ENCODE measurements at regions of chr10 and their contacts with region 1.

Region 1: GRCh38 chr10:88687853-88688467 is 18.1 kb upstream of the LIPK start:
- DNase-seq: peak; percentile 3
- ATAC-seq: no peak
- H3K4me3 ChIP-seq: no peak overlapping the region
- H3K27ac ChIP-seq: no peak overlapping the region
- H3K4me1 ChIP-seq: no peaks in the 10 kb centered on the region
- H3K27me3 ChIP-seq: no peaks in the 10 kb centered on the region
- CTCF ChIP-seq: peak; percentile 48
- EP300 ChIP-seq: no peak
- POLR2A ChIP-seq: no peak
- RAD21 ChIP-seq: no peak

Region 2: GRCh38 chr10:87991946-87992345 is 696.0 kb before region 1 on chr10:
- CTCF ChIA-PET with region 1: no interaction called
- POLR2A ChIA-PET with region 1: no interaction called
- in situ Hi-C with region 1: no loop called
- intact Hi-C with region 1: no loop called
- DNase-seq: no peak
- ATAC-seq: no peak
- H3K4me3 ChIP-seq: no peak overlapping the region
- H3K27ac ChIP-seq: no peak overlapping the region
- H3K4me1 ChIP-seq: no peaks in the 10 kb centered on the region
- H3K27me3 ChIP-seq: no peaks in the 10 kb centered on the region
- CTCF ChIP-seq: no peak
- EP300 ChIP-seq: no peak
- POLR2A ChIP-seq: no peak
- RAD21 ChIP-seq: no peak

Region 3: DNA sequence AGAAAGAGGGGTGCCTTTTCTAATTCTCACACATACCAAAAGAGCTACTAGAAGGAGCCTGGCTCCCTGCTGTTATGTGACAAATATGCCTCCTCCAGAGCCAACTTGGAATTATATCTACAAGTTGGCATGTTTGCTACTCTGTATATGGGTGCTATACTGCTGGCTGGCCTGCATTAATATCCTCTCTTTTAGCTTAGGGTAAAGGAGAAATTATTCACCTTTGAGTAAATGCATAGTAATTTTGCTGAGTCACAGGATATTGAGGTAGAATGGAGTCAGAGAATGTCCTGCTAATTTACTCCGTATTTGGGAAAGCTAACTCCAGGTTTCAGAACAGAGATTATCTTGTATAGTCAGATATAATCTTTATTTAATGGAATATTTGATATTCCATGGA is 47.7 kb after region 1 on chr10:
- CTCF ChIA-PET with region 1: no interaction called
- POLR2A ChIA-PET with region 1: no interaction called
- in situ Hi-C with region 1: no loop called
- intact Hi-C with region 1: loop called (anchors 5 kb)
- DNase-seq: no peak
- ATAC-seq: no peak
- H3K4me3 ChIP-seq: no peak overlapping the region
- H3K27ac ChIP-seq: no peak overlapping the region
- H3K4me1 ChIP-seq: no peaks in the 10 kb centered on the region
- H3K27me3 ChIP-seq: no peaks in the 10 kb centered on the region; a peak in 1 of 5 replicates
- CTCF ChIP-seq: no peak
- EP300 ChIP-seq: no peak
- POLR2A ChIP-seq: no peak
- RAD21 ChIP-seq: no peak

Region 4: GRCh38 chr10:88791924-88792323 is 104.0 kb after region 1 on chr10:
- CTCF ChIA-PET with region 1: interaction called, 7 read pairs
- POLR2A ChIA-PET with region 1: no interaction called
- in situ Hi-C with region 1: no loop called
- intact Hi-C with region 1: loop called (anchors 1 kb)
- DNase-seq: peak; percentile 8
- ATAC-seq: peak; percentile 79
- H3K4me3 ChIP-seq: no peak overlapping the region
- H3K27ac ChIP-seq: no peak overlapping the region
- H3K4me1 ChIP-seq: no peaks in the 10 kb centered on the region
- H3K27me3 ChIP-seq: no peaks in the 10 kb centered on the region
- CTCF ChIP-seq: peak; percentile 45
- EP300 ChIP-seq: no peak
- POLR2A ChIP-seq: no peak
- RAD21 ChIP-seq: no peak

Region 5: GRCh38 chr10:88810196-88810961 is 122.4 kb after region 1 on chr10:
- CTCF ChIA-PET with region 1: interaction called, 13 read pairs
- POLR2A ChIA-PET with region 1: no interaction called
- in situ Hi-C with region 1: no loop called
- intact Hi-C with region 1: loop called (anchors 1 kb)
- DNase-seq: peak; percentile 20
- ATAC-seq: peak; percentile 80
- H3K4me3 ChIP-seq: no peak overlapping the region
- H3K27ac ChIP-seq: no peak overlapping the region
- H3K4me1 ChIP-seq: no peaks in the 10 kb centered on the region
- H3K27me3 ChIP-seq: no peaks in the 10 kb centered on the region; a peak in 1 of 5 replicates
- CTCF ChIP-seq: peak; percentile 53
- EP300 ChIP-seq: no peak
- POLR2A ChIP-seq: no peak
- RAD21 ChIP-seq: no peak

Region 6: DNA sequence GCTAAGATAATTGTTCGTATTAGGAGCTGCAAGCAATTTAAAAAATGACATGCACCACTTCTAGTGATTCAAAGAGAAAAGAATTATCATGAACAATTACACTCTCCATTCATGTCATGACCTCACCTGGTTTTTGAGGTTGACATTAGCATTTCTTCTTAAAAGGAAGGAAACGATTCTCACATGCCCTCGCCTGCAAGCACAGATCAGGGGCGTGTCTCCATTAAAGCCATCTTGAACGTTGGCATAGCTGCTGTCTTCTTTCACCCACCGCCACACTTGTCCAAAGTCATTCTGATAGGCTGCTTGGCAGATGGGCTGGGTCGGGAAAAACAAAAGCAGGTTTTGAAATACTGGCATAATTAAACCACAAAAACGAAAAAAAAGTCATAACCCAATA is 143.7 kb after region 1 on chr10:
- CTCF ChIA-PET with region 1: no interaction called
- POLR2A ChIA-PET with region 1: no interaction called
- in situ Hi-C with region 1: no loop called
- intact Hi-C with region 1: no loop called
- DNase-seq: no peak
- ATAC-seq: no peak
- H3K4me3 ChIP-seq: no peak overlapping the region
- H3K27ac ChIP-seq: no peak overlapping the region
- H3K4me1 ChIP-seq: no peaks in the 10 kb centered on the region
- H3K27me3 ChIP-seq: no peaks in the 10 kb centered on the region
- CTCF ChIP-seq: no peak
- EP300 ChIP-seq: no peak
- POLR2A ChIP-seq: no peak
- RAD21 ChIP-seq: no peak